Naive thymus-derived CD4-positive, alpha-beta T cell (primary cell): ENCODE measurements at regions of chr14 and their contacts with region 1.

Region 1: GRCh38 chr14:95515596-95516552 is 576 bp downstream of the SYNE3 start:
- DNase-seq: peak; percentile 62 to 89 (median 74)
- ATAC-seq: peak; percentile 93
- H3K4me3 ChIP-seq: peak overlapping the region; percentile 99
- H3K4me3 Mint-ChIP-seq: peak overlapping the region; percentile 87 to 98 (median 92)
- H3K27ac ChIP-seq: peak overlapping the region; percentile 80
- H3K27ac Mint-ChIP-seq: peak overlapping the region; percentile 63 to 94 (median 90)
- H3K4me1 ChIP-seq: peaks cover 57 to 61% of the 10 kb centered on the region in 2 donors
- H3K4me1 Mint-ChIP-seq: peaks cover 59 to 79% (median 72%) of the 10 kb centered on the region in 7 donors
- H3K27me3 ChIP-seq: no peaks in the 10 kb centered on the region
- H3K27me3 Mint-ChIP-seq: no peaks in the 10 kb centered on the region

Region 2: DNA sequence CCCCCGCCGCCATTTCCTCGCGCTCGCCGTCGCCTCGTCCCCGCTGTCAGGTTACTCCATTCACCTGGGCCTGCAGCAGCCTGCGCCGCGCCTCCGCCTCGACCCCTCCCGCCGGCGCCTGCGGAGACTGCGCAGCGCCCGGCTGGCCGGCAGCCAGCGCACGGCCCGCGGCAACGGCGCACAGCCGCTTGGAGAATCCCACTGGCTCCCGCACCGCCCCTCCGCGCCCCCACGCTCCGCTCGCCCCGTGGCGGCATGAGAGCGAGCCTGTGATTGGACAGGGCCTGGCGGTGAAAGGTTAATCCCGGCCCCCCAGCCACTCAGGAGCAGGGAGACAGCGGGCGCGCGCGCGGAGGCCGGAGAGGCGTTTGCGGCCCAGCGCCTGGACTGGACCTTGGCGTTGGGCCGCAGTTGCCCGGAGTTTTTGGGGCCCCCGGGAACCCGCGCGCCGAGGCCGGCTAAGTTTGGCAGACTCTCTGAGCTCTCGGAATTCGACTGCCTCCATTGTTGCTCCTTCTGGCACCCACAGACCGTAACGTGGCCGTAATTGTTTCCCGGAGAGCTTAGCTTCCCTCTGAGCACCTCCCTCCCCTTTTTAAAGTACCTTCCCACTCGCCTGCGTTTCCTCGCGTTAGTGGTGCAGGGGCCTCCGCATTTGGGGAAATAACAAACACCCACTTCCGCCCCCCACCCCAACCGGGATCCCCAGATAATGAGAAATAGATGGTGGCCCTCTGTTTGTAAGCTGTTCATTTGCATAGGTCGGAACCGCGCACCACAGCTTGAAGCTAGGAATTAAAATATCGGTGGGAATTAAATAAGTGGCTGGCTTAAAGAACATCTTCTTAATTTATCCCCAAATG is 358.3 kb before region 1 on chr14 and contains the start of gene DICER1:
- CTCF ChIA-PET with region 1: no interaction called
- POLR2A ChIA-PET with region 1: no interaction called
- intact Hi-C with region 1: loop called (anchors 5 kb)
- DNase-seq: peak; percentile 84 to 98 (median 93)
- ATAC-seq: peak; percentile 92
- H3K4me3 ChIP-seq: peak within 1 kb of the TSS; percentile 87
- H3K4me3 Mint-ChIP-seq: peak within 1 kb of the TSS; percentile 94 to 99 (median 98)
- H3K27ac ChIP-seq: peak within 1 kb of the TSS; percentile 82
- H3K27ac Mint-ChIP-seq: peak within 1 kb of the TSS; percentile 97 to 100 (median 99)
- H3K4me1 ChIP-seq: peaks cover 31 to 36% of the 10 kb centered on the region in 2 donors
- H3K4me1 Mint-ChIP-seq: peaks cover 32 to 55% (median 42%) of the 10 kb centered on the region in 7 donors
- H3K27me3 ChIP-seq: no peaks in the 10 kb centered on the region
- H3K27me3 Mint-ChIP-seq: no peaks in the 10 kb centered on the region
- total RNA-seq, gene DICER1: 61.1 to 78.2 (median 67.4) TPM

Region 3: GRCh38 chr14:95442633-95443021 is 73.2 kb before region 1 on chr14:
- CTCF ChIA-PET with region 1: interaction called, 12 read pairs
- POLR2A ChIA-PET with region 1: interaction called, 3 read pairs
- intact Hi-C with region 1: loop called in 1 of 2 experiments (anchors 1 kb)
- DNase-seq: peak; percentile 51 to 76 (median 68)
- ATAC-seq: peak; percentile 94
- H3K4me3 ChIP-seq: no peak overlapping the region
- H3K4me3 Mint-ChIP-seq: no peak overlapping the region
- H3K27ac ChIP-seq: no peak overlapping the region
- H3K27ac Mint-ChIP-seq: peak overlapping the region; percentile 3 to 77 (median 57)
- H3K4me1 ChIP-seq: no peaks in the 10 kb centered on the region
- H3K4me1 Mint-ChIP-seq: peaks cover 4 to 15% (median 5%) of the 10 kb centered on the region in 7 donors
- H3K27me3 ChIP-seq: no peaks in the 10 kb centered on the region
- H3K27me3 Mint-ChIP-seq: no peaks in the 10 kb centered on the region

Region 4: GRCh38 chr14:95460647-95461478 is 55.0 kb before region 1 on chr14:
- CTCF ChIA-PET with region 1: interaction called, 13 read pairs
- POLR2A ChIA-PET with region 1: interaction called, 255 read pairs
- intact Hi-C with region 1: loop called in 1 of 2 experiments (anchors 1 kb)
- DNase-seq: no peak
- ATAC-seq: no peak
- H3K4me3 ChIP-seq: no peak overlapping the region
- H3K4me3 Mint-ChIP-seq: peak overlapping the region in 6 of 10 donors; percentile 25 to 86 (median 34)
- H3K27ac ChIP-seq: peak overlapping the region; percentile 85
- H3K27ac Mint-ChIP-seq: peak overlapping the region in 8 of 9 donors; percentile 95 to 100 (median 99)
- H3K4me1 ChIP-seq: peaks cover 43 to 50% of the 10 kb centered on the region in 2 donors
- H3K4me1 Mint-ChIP-seq: peaks cover 38 to 77% (median 70%) of the 10 kb centered on the region in 7 donors
- H3K27me3 ChIP-seq: no peaks in the 10 kb centered on the region
- H3K27me3 Mint-ChIP-seq: no peaks in the 10 kb centered on the region

Region 5: GRCh38 chr14:95483309-95484165 is 32.3 kb before region 1 on chr14:
- CTCF ChIA-PET with region 1: no interaction called
- POLR2A ChIA-PET with region 1: interaction called, 5 read pairs
- intact Hi-C with region 1: loop called in 1 of 2 experiments (anchors 5 kb)
- DNase-seq: no peak
- ATAC-seq: no peak
- H3K4me3 ChIP-seq: no peak overlapping the region
- H3K4me3 Mint-ChIP-seq: no peak overlapping the region
- H3K27ac ChIP-seq: no peak overlapping the region
- H3K27ac Mint-ChIP-seq: peak overlapping the region; percentile 3 to 79 (median 60)
- H3K4me1 ChIP-seq: peaks cover under 1 to 19% of the 10 kb centered on the region in 2 donors
- H3K4me1 Mint-ChIP-seq: peaks cover 47 to 63% (median 55%) of the 10 kb centered on the region in 7 donors
- H3K27me3 ChIP-seq: no peaks in the 10 kb centered on the region
- H3K27me3 Mint-ChIP-seq: no peaks in the 10 kb centered on the region

Region 6: DNA sequence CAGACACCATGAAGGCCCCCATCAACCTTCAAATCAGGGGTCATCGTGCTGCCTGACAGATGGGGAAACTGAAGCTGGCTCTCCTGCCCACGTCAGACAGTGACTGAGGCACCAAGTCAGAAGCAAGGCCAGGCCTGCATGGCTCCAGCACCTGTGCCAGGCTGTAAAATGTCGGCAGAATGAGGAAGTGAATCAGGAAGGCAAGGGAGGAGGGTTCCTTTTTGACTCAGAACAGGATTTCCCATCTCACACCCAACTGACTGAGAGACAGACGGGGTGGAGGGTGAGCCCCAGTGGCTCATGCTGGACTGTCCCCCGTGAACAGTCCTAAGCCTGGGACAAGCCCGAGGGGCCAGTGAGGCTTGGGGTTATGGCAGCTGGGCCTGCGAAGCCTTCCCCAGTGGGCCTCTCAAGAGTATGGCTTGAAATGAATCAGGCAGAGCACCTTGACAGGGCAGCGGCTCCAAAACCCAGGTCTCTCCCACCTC is 20.3 kb before region 1 on chr14:
- CTCF ChIA-PET with region 1: no interaction called
- POLR2A ChIA-PET with region 1: interaction called, 7 read pairs
- intact Hi-C with region 1: loop called (anchors 2 kb)
- DNase-seq: no peak
- ATAC-seq: peak; percentile 81
- H3K4me3 ChIP-seq: peak overlapping the region; percentile 5
- H3K4me3 Mint-ChIP-seq: peak overlapping the region in 7 of 10 donors; percentile 33 to 55 (median 46)
- H3K27ac ChIP-seq: peak overlapping the region; percentile 39
- H3K27ac Mint-ChIP-seq: peak overlapping the region; percentile 72 to 90 (median 84)
- H3K4me1 ChIP-seq: peaks cover 18 to 22% of the 10 kb centered on the region in 2 donors
- H3K4me1 Mint-ChIP-seq: peaks cover 54 to 72% (median 66%) of the 10 kb centered on the region in 7 donors
- H3K27me3 ChIP-seq: no peaks in the 10 kb centered on the region
- H3K27me3 Mint-ChIP-seq: no peaks in the 10 kb centered on the region

Region 7: DNA sequence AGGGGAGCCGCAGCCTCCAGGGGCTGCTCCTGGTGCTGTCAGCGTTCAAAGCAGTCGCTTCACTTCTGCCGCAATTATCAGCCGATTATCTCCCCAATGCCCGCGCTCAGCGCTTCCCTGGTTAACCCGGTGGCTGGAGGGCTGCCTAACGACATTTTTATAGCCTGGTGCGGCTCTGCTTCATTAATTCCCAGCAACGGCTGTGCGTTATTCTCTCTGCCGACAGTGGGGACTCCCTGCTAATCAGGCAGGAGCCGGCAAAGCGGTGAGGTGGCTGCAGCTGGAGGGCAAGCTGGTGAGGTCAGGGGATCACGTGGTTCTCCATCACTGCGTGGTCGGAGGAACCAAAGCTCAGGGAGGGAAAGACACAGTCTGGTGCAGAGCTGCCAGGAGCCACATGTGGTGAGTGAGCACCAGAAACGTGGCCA is 81.9 kb after region 1 on chr14:
- CTCF ChIA-PET with region 1: no interaction called
- POLR2A ChIA-PET with region 1: no interaction called
- intact Hi-C with region 1: no loop called
- DNase-seq: no peak
- ATAC-seq: no peak
- H3K4me3 ChIP-seq: no peak overlapping the region
- H3K4me3 Mint-ChIP-seq: no peak overlapping the region
- H3K27ac ChIP-seq: no peak overlapping the region
- H3K27ac Mint-ChIP-seq: no peak overlapping the region
- H3K4me1 ChIP-seq: no peaks in the 10 kb centered on the region
- H3K4me1 Mint-ChIP-seq: peaks cover 0 to 2% (median 0%) of the 10 kb centered on the region in 7 donors
- H3K27me3 ChIP-seq: peaks cover 0 to 5% of the 10 kb centered on the region in 2 donors
- H3K27me3 Mint-ChIP-seq: peaks cover 4 to 39% (median 29%) of the 10 kb centered on the region in 5 donors

Region 8: GRCh38 chr14:95697764-95698163 is 181.9 kb after region 1 on chr14:
- CTCF ChIA-PET with region 1: no interaction called
- POLR2A ChIA-PET with region 1: no interaction called
- intact Hi-C with region 1: no loop called
- DNase-seq: no peak
- ATAC-seq: no peak
- H3K4me3 ChIP-seq: no peak overlapping the region
- H3K4me3 Mint-ChIP-seq: no peak overlapping the region
- H3K27ac ChIP-seq: no peak overlapping the region
- H3K27ac Mint-ChIP-seq: no peak overlapping the region
- H3K4me1 ChIP-seq: no peaks in the 10 kb centered on the region
- H3K4me1 Mint-ChIP-seq: peaks cover 0 to 2% (median 0%) of the 10 kb centered on the region in 7 donors
- H3K27me3 ChIP-seq: no peaks in the 10 kb centered on the region
- H3K27me3 Mint-ChIP-seq: peaks cover 30 to 59% (median 36%) of the 10 kb centered on the region in 5 donors

Region 9: GRCh38 chr14:95725685-95726336 is 209.9 kb after region 1 on chr14:
- CTCF ChIA-PET with region 1: no interaction called
- POLR2A ChIA-PET with region 1: no interaction called
- intact Hi-C with region 1: no loop called
- DNase-seq: no peak
- ATAC-seq: peak; percentile 31
- H3K4me3 ChIP-seq: no peak overlapping the region
- H3K4me3 Mint-ChIP-seq: no peak overlapping the region
- H3K27ac ChIP-seq: no peak overlapping the region
- H3K27ac Mint-ChIP-seq: no peak overlapping the region
- H3K4me1 ChIP-seq: no peaks in the 10 kb centered on the region
- H3K4me1 Mint-ChIP-seq: peaks cover 0 to 6% (median 0%) of the 10 kb centered on the region in 7 donors
- H3K27me3 ChIP-seq: no peaks in the 10 kb centered on the region
- H3K27me3 Mint-ChIP-seq: peaks cover 11 to 60% (median 49%) of the 10 kb centered on the region in 5 donors

Region 10: DNA sequence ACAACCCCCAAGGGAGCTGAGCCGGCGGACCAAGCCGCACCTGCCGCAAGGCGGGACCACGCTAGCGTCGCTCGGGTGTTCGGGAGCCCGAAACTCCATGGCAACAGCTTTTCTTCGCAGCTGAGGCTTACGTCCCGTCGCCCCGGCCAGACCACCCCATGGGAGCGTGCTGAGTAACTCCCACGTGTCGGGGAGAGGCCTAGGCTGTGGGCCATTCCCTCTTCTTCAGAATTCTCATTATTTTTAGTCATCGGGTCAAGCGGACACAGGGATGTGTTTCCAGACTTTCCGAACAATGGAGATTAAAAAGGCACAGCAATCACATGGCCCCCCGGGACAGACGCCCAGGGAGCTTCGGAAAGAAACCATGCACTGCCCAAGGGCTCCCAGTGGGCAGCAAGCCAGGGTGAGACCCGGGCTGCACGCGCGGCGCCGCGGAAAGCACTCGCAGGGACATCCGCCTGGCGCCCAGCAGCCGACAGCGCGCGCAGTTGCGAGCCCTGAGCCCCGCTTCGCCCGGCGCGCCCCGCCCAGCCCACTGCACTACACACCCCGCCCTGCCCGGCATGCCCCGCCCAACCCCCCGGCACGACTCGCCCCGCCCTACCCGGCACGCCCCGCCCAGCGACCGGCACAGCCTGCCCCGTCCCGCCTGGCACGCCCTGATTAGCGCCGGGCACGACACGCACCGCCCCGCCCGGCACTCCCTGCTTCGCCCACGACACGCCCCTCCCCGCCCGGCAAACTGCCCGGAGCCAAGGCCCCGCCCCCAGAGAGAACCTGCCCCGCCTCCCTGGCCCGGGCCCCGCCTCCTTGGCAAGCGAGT is 875.6 kb after region 1 on chr14:
- CTCF ChIA-PET with region 1: no interaction called
- POLR2A ChIA-PET with region 1: interaction called, 4 read pairs
- intact Hi-C with region 1: loop called in 1 of 2 experiments (anchors 5 kb)
- DNase-seq: peak; percentile 97 to 100 (median 99)
- ATAC-seq: peak; percentile 97
- H3K4me3 ChIP-seq: peak overlapping the region; percentile 90
- H3K4me3 Mint-ChIP-seq: peak overlapping the region; percentile 85 to 94 (median 92)
- H3K27ac ChIP-seq: peak overlapping the region; percentile 55
- H3K27ac Mint-ChIP-seq: peak overlapping the region in 8 of 9 donors; percentile 61 to 93 (median 86)
- H3K4me1 ChIP-seq: peaks cover 7 to 11% of the 10 kb centered on the region in 2 donors
- H3K4me1 Mint-ChIP-seq: peaks cover 0 to 7% (median 0%) of the 10 kb centered on the region in 7 donors
- H3K27me3 ChIP-seq: no peaks in the 10 kb centered on the region
- H3K27me3 Mint-ChIP-seq: peaks cover 0 to 14% (median 0%) of the 10 kb centered on the region in 5 donors